HepG2 (cell line): ENCODE measurements at regions of chr15 and their contacts with region 1.

Region 1: GRCh38 chr15:100383302-100384107 is 41.7 kb upstream of the ADAMTS17 start:
- DNase-seq: peak; percentile 41
- ATAC-seq: peak; percentile 82
- H3K4me3 ChIP-seq: no peak overlapping the region
- H3K27ac ChIP-seq: no peak overlapping the region
- H3K4me1 ChIP-seq: no peaks in the 10 kb centered on the region
- H3K27me3 ChIP-seq: peaks cover 0 to 3% of the 10 kb centered on the region in 2 experiments; a peak in 1 of 5 replicates
- CTCF ChIP-seq: peak; percentile 76
- EP300 ChIP-seq: no peak
- POLR2A ChIP-seq: no peak
- RAD21 ChIP-seq: peak; percentile 53; the same call in 1 of the 2 replicates

Region 2: GRCh38 chr15:99788183-99788582 is 595.3 kb before region 1 on chr15:
- CTCF ChIA-PET with region 1: interaction called, 3 read pairs
- POLR2A ChIA-PET with region 1: no interaction called
- in situ Hi-C with region 1: no loop called
- intact Hi-C with region 1: loop called (anchors 5 kb)
- DNase-seq: no peak
- ATAC-seq: no peak
- H3K4me3 ChIP-seq: no peak overlapping the region
- H3K27ac ChIP-seq: no peak overlapping the region
- H3K4me1 ChIP-seq: peaks cover 47% of the 10 kb centered on the region
- H3K27me3 ChIP-seq: no peaks in the 10 kb centered on the region
- CTCF ChIP-seq: no peak
- EP300 ChIP-seq: no peak
- POLR2A ChIP-seq: no peak
- RAD21 ChIP-seq: no peak

Region 3: DNA sequence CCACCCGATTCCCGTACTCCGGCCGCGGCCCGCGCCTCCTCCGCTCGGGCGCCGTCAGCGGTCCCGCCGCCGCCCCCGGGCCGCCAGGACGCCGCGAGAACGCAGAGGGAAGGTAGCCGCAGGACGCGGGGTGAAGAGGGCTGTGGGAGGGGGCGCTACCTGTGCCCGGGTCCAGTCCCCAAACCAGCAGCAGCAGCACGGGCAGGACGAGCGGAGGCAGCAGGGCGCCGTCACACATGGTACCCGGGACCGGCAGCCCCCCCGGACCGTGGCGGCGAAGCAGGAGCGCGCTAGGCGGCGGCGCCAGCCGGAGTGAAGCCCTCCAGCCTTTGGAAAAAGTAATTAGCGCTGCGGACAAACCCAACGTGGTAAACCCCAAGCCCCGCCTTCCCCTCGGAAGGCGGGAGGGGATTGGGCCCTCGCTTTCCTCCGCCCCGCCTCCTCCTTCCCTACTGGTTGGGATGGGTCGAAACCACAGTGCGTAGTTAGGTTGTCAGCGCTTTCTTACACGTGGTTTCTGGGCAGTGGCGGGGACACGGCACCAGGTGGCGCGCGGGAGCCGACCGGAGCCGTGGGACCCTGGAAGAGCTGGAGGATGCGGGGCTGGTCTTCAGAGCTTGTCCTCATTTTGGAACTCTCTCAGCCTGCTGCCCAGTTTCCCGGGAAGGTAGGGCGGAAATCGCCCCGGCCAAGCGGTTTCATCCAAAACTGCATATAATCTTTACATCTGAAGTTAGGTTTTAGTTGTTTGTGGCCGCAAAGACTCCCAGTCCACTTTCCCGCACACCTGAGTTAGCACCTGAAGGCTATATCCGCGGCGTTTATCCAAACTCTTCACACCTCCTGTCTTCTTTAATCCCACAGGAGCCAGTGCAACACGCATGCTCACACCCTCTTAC is 41.6 kb before region 1 on chr15 and contains the start of gene ADAMTS17:
- CTCF ChIA-PET with region 1: interaction called, 12 read pairs
- POLR2A ChIA-PET with region 1: no interaction called
- in situ Hi-C with region 1: loop called (anchors 10 kb)
- intact Hi-C with region 1: loop called (anchors 5 kb)
- DNase-seq: peak; percentile 77
- ATAC-seq: peak; percentile 94
- H3K4me3 ChIP-seq: peak within 1 kb of the TSS; percentile 48 to 69 (median 55); a peak in 5 of 6 replicates
- H3K27ac ChIP-seq: no peak within 1 kb of the TSS
- H3K4me1 ChIP-seq: peaks cover 14% of the 10 kb centered on the region
- H3K27me3 ChIP-seq: peaks cover 2 to 31% of the 10 kb centered on the region in 2 experiments
- CTCF ChIP-seq: peak; percentile 88
- EP300 ChIP-seq: no peak
- POLR2A ChIP-seq: no peak
- RAD21 ChIP-seq: peak; percentile 51; the same call in 1 of the 2 replicates
- total RNA-seq, gene ADAMTS17: 0.02 and 0.36 TPM in 2 replicates

Region 4: DNA sequence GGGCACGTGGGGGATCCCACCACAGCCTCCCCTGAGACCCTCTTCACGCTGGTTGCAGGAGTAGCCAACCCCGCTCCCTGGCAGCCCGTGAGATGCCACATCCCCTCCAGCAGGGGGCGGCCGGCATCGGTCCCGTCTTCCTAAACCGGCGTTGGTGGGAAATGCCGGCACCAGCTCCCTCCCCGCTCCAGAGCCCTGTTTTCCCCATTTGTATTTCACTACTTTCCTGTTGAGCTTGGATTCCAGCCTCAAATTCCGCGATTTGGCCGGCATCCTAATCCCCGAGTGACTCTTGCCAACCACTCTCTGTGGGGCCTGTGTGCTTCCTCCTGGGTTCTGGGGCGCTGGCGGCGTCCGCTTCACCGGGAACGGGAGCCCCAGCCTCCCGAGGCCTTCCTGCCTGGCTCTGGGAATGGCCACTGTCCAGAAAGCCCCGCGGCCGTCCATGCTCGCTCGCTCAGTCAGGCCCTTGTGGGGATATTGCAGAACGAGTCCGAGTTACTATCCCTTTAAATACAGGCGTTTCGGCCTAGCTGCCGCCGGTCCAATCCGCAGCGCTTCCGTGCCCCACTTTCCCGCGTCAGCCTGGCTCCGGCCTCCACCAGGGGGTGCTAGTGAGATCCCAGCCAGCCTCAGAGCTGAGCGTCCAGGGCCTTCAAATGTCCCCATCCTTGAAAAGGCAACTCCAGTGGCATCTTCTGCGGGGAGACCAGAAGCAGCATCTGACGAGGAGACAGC is 33.6 kb before region 1 on chr15:
- CTCF ChIA-PET with region 1: interaction called, 41 read pairs
- POLR2A ChIA-PET with region 1: interaction called, 4 read pairs
- in situ Hi-C with region 1: no loop called
- intact Hi-C with region 1: loop called (anchors 1 kb)
- DNase-seq: peak; percentile 76
- ATAC-seq: peak; percentile 96
- H3K4me3 ChIP-seq: peak overlapping the region; percentile 51 to 72 (median 53); a peak in 5 of 6 replicates
- H3K27ac ChIP-seq: peak overlapping the region; percentile 39
- H3K4me1 ChIP-seq: peaks cover 19% of the 10 kb centered on the region
- H3K27me3 ChIP-seq: no peaks in the 10 kb centered on the region; a peak in 2 of 5 replicates
- CTCF ChIP-seq: peak; percentile 90
- EP300 ChIP-seq: no peak
- POLR2A ChIP-seq: no peak
- RAD21 ChIP-seq: peak; percentile 62

Region 5: DNA sequence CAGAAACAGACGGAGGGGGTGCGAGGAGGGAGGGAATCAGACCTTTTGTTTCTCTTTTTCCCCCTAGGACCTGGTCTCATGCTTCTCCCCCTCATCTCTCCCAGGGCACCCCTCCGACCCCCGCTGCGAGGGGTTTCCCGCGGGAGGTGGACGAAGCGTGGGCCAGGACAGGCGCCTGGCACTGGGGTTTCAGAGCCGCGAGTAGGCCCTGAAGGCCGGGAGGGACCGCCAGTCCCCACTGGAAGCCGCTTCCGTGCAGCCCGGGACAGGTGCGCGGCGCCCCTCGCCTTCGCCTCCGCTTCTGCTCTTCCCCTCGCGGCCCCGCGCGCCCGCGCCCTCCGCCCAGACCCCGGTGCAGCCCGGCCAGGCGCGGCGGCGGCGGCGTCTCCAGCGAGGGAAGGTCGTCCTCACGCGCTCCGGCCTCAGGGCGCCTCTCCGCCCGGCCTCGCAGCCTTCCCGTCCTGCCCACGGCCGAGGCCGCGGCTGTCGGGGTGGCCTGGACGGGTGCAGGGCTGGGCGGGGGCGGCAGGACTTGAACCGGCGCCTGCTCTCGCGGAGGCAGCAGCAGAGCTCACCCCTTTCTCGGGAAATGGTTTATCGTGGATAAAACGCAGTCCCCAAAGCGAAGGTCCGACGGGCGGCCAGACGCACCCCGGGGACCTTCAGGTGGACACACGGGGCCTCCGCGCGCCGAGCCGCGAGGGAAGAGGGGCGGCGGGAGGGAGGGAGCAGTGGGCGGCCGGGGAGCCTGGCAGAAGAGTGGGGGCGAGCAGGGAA is 10.2 kb before region 1 on chr15:
- CTCF ChIA-PET with region 1: no interaction called
- POLR2A ChIA-PET with region 1: no interaction called
- in situ Hi-C with region 1: no loop called
- intact Hi-C with region 1: no loop called
- DNase-seq: no peak
- ATAC-seq: no peak; the same call in 2 of the 3 replicates
- H3K4me3 ChIP-seq: no peak overlapping the region
- H3K27ac ChIP-seq: no peak overlapping the region
- H3K4me1 ChIP-seq: no peaks in the 10 kb centered on the region
- H3K27me3 ChIP-seq: peaks cover 0 to 14% of the 10 kb centered on the region in 2 experiments; a peak in 3 of 5 replicates
- CTCF ChIP-seq: no peak
- EP300 ChIP-seq: no peak
- POLR2A ChIP-seq: no peak
- RAD21 ChIP-seq: no peak

Region 6: GRCh38 chr15:100778831-100779288 is 395.4 kb after region 1 on chr15:
- CTCF ChIA-PET with region 1: no interaction called
- POLR2A ChIA-PET with region 1: no interaction called
- in situ Hi-C with region 1: no loop called
- intact Hi-C with region 1: no loop called
- DNase-seq: no peak
- ATAC-seq: no peak
- H3K4me3 ChIP-seq: no peak overlapping the region
- H3K27ac ChIP-seq: no peak overlapping the region
- H3K4me1 ChIP-seq: no peaks in the 10 kb centered on the region
- H3K27me3 ChIP-seq: peaks cover 0 to 36% of the 10 kb centered on the region in 2 experiments; a peak in 3 of 5 replicates
- CTCF ChIP-seq: no peak
- EP300 ChIP-seq: no peak
- POLR2A ChIP-seq: no peak
- RAD21 ChIP-seq: no peak

Region 7: DNA sequence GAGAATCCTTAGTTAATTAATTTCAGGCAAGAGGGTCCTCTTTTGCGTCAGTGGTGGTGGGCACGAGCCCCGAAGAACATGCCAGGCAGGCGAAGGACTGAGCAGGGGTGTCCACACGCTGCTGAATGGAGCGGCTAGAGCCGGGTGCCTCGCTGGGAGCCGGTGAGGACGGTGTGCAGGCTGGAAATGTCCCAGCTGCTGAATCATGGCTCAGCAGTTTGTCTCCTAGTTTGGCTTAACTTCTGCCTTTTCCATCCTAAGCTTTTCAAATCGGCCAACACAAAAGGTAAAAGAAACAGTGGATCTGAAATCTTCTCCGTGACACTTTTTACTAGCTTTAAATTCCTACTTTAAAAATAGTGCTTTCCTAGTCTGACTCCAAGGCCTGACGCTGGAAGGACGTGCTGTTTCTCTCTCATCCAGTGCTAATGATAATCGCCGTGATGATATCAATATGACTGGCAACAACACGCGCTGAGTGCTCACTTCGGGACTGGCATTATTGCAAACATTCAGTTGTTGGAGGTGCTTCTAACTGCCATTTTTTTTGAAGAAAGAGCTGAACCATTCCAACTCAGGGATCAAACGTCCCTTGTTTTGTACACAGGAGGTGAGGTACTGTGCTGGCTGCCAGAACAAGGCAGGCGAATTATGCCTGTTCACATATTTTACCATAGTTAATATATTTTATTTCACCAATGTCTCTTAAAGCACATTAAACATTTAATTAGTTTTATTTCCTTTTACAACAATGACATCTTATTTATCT is 1086.2 kb after region 1 on chr15:
- CTCF ChIA-PET with region 1: no interaction called
- POLR2A ChIA-PET with region 1: no interaction called
- in situ Hi-C with region 1: no loop called
- intact Hi-C with region 1: no loop called
- DNase-seq: no peak
- ATAC-seq: peak; percentile 48; the same call in 2 of the 3 replicates
- H3K4me3 ChIP-seq: no peak overlapping the region
- H3K27ac ChIP-seq: peak overlapping the region; percentile 34
- H3K4me1 ChIP-seq: peaks cover 34% of the 10 kb centered on the region
- H3K27me3 ChIP-seq: no peaks in the 10 kb centered on the region
- CTCF ChIP-seq: no peak
- EP300 ChIP-seq: no peak
- POLR2A ChIP-seq: no peak
- RAD21 ChIP-seq: no peak